ENCODE measurements at regions of chr4 and their contacts with region 1.

Region 1: DNA sequence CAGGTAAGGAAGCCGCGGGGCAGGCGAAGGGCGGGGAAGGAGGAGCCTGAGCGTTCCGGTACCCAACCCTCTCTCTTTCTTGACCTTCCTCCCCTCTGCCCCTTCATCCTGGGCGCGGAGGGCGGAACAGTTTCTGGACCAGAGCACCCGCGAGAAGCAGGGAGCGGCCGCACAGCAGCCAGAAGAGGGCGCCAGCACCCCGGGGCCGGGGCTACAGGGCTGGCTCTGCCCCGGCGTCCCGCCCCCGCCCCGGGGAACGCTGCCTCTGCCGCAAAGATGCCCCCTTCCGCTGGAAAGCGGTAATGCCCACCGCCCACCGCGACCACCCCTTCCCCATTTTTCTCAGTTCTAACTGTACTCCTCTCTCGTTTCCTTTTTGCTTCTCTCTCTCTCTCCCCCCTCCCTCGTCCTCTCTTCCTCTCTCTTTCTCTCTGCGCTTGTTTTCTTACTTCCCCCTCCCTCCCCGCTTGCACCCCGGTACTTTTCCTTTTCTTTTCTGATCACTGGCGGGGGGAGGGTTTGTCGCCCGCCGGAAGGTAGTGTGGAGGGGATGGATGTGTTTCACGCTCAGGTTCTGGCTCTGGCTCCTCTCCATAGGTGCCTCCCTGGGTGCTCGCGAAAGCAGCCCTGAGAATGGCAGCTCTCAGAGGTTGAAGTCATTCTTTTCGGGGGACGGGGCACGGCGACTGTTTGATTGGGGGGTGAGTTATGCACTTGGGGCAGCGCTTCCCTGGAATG is 13.1 kb upstream of the PRDM8 start:
- DNase-seq: peak; percentile 89 to 96 (median 95)
- ATAC-seq: peak; percentile 97 to 98
- H3K4me3 ChIP-seq: peak overlapping the region; percentile 49
- H3K27ac ChIP-seq: no peak overlapping the region
- H3K4me1 ChIP-seq: peaks cover 3% of the 10 kb centered on the region
- H3K27me3 ChIP-seq: no peaks in the 10 kb centered on the region

Region 2: GRCh38 chr4:80072744-80073472 is 111.3 kb before region 1 on chr4 and contains the start of gene ANTXR2:
- intact Hi-C with region 1: loop called in 1 of 4 experiments (anchors 10 kb)
- DNase-seq: peak; percentile 96 to 98 (median 98)
- ATAC-seq: peak; percentile 99
- H3K4me3 ChIP-seq: peak within 1 kb of the TSS; percentile 68
- H3K27ac ChIP-seq: peak within 1 kb of the TSS; percentile 96
- H3K4me1 ChIP-seq: no peaks in the 10 kb centered on the region
- H3K27me3 ChIP-seq: no peaks in the 10 kb centered on the region
- total RNA-seq, gene ANTXR2: 38.6 to 51.4 (median 46.7) TPM

Region 3: DNA sequence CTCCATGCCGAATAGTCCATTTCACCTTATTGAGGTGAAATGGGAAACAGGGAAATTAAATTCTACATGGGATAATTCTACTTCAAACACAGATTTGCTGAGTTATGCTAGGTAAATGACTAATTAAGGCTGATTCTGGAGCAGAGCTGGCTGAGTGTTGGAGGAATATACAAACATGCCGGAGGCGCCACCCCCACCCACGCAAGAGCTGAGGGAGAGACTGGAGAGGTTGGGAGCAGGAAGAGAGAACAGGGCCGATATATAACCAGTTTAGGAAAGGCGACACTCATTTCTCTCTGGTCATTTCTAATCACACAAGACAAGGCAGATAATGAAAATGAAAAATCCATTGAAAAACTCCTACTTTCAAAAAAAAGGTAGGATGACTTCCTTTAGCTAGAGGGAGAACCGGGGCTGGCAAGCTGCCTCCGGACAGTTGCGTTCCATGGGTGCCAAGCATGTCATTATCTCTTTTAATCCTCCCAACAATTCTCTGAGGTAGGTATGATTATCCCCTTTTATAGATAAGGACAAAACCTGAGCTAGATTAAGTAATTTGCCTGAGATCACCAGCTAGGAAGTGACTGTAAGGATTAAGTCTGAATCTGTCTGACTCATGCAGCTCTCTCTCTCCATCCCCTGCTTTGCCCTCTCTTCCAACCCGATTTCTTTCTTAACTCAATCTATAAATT is 123.7 kb after region 1 on chr4:
- intact Hi-C with region 1: no loop called
- DNase-seq: peak in 2 of 3 donors; percentile 12 to 16
- ATAC-seq: peak in 1 of 2 donors; percentile 38
- H3K4me3 ChIP-seq: no peak overlapping the region
- H3K27ac ChIP-seq: no peak overlapping the region
- H3K4me1 ChIP-seq: no peaks in the 10 kb centered on the region
- H3K27me3 ChIP-seq: no peaks in the 10 kb centered on the region

Measured in right cardiac atrium (tissue), 5 donors.